Activated B cell treated with CpG ODN at 0.5 μM for 24 hours (primary cell): ENCODE measurements at regions of chr14 and their contacts with region 1.

Region 1: DNA sequence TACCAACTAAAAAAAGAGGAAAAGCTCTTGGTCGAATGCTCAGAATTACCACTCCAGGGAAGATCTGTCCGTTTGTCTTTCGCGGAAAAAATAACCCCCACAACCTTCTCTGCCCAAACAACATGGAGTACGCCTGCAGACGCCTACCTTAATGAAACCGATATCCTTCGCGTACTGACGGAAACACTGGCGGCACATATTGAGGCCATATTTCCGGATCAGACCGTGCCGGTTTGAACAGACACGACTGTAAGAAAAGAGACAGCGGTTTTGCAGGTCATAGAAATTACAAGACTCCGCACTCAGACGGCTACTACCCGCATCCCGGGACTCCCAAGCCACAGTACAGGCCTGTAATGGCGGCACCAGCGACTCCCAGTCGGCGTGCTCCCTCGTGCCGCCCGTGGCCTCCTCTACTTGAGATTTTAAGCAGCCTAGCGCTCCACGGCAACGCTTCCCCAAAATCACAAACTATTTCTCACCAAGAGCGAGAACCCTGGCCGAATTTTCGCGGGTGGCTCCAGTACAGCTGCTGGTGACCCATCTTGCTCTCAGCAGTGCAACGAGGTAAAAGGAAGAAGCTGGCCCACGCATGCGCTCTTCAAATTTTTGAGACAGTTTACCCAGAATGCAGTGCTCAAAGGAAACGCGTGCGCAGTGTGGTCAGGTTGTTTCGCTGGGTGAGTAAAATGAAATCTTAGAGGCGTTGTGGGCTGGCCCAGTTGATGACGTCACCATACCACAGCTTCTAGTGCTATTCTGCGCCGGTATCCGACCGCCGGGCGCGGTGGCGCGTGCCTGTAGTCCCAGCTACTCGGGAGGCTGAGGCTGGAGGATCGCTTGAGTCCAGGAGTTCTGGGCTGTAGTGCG is at the start of gene RPS29:
- DNase-seq: peak; percentile 94
- ATAC-seq: peak; percentile 82
- H3K4me3 Mint-ChIP-seq: peak within 1 kb of the TSS; percentile 98
- H3K27ac Mint-ChIP-seq: peak within 1 kb of the TSS; percentile 99
- H3K4me1 Mint-ChIP-seq: peaks cover 53% of the 10 kb centered on the region
- H3K27me3 Mint-ChIP-seq: no peaks in the 10 kb centered on the region
- CTCF ChIP-seq: no peak
- total RNA-seq, gene RPS29: 3,259 and 3,732 TPM in 2 replicates

Region 2: DNA sequence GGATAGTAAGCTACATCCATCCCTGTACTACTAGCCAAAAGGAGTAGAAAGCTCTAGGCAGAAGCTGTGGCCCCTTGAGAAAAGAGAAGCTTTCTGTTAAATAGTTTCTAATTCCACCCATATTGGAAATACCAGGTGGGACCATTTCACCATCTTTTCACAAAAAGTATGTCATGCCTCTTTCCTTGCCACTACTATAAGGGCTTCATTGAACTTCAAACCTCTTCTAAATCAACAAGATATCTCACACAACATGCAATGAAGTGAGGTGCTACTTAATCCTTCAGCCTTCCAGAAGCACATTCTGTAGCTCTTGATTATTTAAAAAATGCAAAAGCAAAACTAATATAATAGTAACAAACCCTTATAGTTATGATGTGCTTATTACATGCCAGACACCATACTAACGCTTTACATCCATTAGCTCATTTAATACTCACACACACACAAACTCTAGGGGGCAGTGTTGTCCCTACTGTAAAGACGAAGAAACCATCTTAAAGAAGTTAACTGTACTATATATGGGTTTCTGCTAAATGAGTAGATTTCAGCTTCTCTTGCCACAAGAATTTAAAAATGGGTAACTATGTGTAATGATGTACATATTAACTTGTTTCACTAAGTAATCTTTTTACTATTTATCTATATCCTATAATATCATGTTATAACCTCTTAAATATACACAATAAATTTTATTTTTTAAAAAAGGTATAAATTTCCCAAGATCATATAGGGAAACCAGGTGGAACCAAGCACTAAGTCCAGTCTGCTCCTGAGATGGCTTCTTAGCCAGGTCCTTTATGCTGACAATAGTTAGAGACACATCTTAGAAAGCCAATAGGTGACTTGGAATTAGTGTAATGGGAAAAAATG is 124.3 kb before region 1 on chr14:
- CTCF ChIA-PET with region 1: interaction called, 7 read pairs
- POLR2A ChIA-PET with region 1: interaction called, 5 read pairs
- intact Hi-C with region 1: loop called (anchors 5 kb)
- DNase-seq: no peak
- ATAC-seq: peak; percentile 81
- H3K4me3 Mint-ChIP-seq: no peak overlapping the region
- H3K27ac Mint-ChIP-seq: no peak overlapping the region
- H3K4me1 Mint-ChIP-seq: no peaks in the 10 kb centered on the region
- H3K27me3 Mint-ChIP-seq: peaks cover 5% of the 10 kb centered on the region
- CTCF ChIP-seq: peak; percentile 62

Region 3: GRCh38 chr14:49566714-49567113 is 19.3 kb before region 1 on chr14:
- CTCF ChIA-PET with region 1: no interaction called
- POLR2A ChIA-PET with region 1: no interaction called
- intact Hi-C with region 1: no loop called
- DNase-seq: no peak
- ATAC-seq: no peak
- H3K4me3 Mint-ChIP-seq: no peak overlapping the region
- H3K27ac Mint-ChIP-seq: no peak overlapping the region
- H3K4me1 Mint-ChIP-seq: no peaks in the 10 kb centered on the region
- H3K27me3 Mint-ChIP-seq: no peaks in the 10 kb centered on the region
- CTCF ChIP-seq: no peak

Region 4: DNA sequence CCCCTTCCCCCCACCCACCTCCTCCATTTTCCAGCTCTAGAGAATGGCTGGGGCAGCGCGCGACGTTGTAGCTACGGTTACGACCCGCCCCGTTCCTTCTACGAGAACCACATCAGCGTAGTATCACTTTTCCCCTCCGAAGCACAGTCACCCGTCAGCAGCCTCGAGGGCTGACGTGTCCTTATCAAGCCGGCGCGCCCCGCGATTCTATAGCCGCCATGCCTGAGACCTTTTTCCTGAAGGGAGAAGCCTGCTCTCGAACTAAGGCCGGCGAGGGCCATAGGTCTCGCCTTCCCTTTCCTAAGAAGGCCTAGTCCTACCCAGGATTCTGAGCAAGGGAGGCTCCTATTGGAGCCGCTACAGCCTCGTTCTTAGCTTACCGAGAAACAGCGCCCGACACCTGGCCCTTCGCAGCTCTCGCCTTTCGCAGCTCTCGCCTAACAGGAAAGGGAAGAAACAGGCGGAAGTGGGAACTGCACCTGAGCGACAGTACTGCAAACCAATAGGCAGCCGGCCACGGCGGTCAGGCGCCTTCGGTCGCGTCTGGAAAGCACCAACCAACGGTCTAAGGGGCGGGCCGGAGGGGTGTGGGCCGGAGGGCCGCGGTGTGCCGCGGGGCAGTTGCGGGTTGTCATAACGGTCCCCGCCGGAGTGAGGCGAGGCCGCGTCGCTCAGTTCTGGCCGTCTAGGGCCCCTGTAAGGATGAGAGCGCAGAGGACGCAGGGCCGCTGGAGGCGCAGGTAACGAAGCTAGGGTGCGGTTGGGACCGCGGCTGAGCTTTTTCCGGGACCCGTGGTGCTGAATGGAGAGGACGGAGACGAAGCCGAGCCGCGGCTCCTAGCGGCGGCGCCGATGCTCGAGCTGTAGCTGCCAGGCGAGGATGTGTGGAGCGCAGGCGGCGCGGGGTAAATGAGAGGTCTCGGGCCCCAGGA is 34.4 kb after region 1 on chr14 and contains the starts of genes MGAT2 and RPL36AL:
- CTCF ChIA-PET with region 1: interaction called, 29 read pairs
- POLR2A ChIA-PET with region 1: interaction called, 211 read pairs
- intact Hi-C with region 1: loop called (anchors 1 kb)
- DNase-seq: peak; percentile 90
- ATAC-seq: peak; percentile 90
- H3K4me3 Mint-ChIP-seq: peak within 1 kb of the TSS; percentile 97
- H3K27ac Mint-ChIP-seq: peak within 1 kb of the TSS; percentile 97
- H3K4me1 Mint-ChIP-seq: peaks cover 61% of the 10 kb centered on the region
- H3K27me3 Mint-ChIP-seq: no peaks in the 10 kb centered on the region
- CTCF ChIP-seq: no peak
- total RNA-seq, gene MGAT2: 39.7 and 40.5 TPM in 2 replicates
- total RNA-seq, gene RPL36AL: 150 and 166 TPM in 2 replicates

Region 5: GRCh38 chr14:49767562-49768300 is 181.7 kb after region 1 on chr14 and contains the start of gene KLHDC2:
- CTCF ChIA-PET with region 1: no interaction called
- POLR2A ChIA-PET with region 1: interaction called, 20 read pairs
- intact Hi-C with region 1: loop called (anchors 1 kb)
- DNase-seq: peak; percentile 86
- ATAC-seq: peak; percentile 88
- H3K4me3 Mint-ChIP-seq: peak within 1 kb of the TSS; percentile 97
- H3K27ac Mint-ChIP-seq: peak within 1 kb of the TSS; percentile 99
- H3K4me1 Mint-ChIP-seq: peaks cover 33% of the 10 kb centered on the region
- H3K27me3 Mint-ChIP-seq: no peaks in the 10 kb centered on the region
- CTCF ChIP-seq: no peak
- total RNA-seq, gene KLHDC2: 27.0 and 31.2 TPM in 2 replicates

Region 6: GRCh38 chr14:51239813-51240803 is 1654.1 kb after region 1 on chr14 and contains the start of gene TMX1:
- CTCF ChIA-PET with region 1: no interaction called
- POLR2A ChIA-PET with region 1: no interaction called
- intact Hi-C with region 1: loop called (anchors 10 kb)
- DNase-seq: peak; percentile 83
- ATAC-seq: peak; percentile 92
- H3K4me3 Mint-ChIP-seq: no peak within 1 kb of the TSS
- H3K27ac Mint-ChIP-seq: no peak within 1 kb of the TSS
- H3K4me1 Mint-ChIP-seq: peaks cover 12% of the 10 kb centered on the region
- H3K27me3 Mint-ChIP-seq: no peaks in the 10 kb centered on the region
- CTCF ChIP-seq: no peak
- total RNA-seq, gene TMX1: 24.6 and 25.3 TPM in 2 replicates